ENCODE measurements at regions of chr11 and their contacts with region 1.

Region 1: DNA sequence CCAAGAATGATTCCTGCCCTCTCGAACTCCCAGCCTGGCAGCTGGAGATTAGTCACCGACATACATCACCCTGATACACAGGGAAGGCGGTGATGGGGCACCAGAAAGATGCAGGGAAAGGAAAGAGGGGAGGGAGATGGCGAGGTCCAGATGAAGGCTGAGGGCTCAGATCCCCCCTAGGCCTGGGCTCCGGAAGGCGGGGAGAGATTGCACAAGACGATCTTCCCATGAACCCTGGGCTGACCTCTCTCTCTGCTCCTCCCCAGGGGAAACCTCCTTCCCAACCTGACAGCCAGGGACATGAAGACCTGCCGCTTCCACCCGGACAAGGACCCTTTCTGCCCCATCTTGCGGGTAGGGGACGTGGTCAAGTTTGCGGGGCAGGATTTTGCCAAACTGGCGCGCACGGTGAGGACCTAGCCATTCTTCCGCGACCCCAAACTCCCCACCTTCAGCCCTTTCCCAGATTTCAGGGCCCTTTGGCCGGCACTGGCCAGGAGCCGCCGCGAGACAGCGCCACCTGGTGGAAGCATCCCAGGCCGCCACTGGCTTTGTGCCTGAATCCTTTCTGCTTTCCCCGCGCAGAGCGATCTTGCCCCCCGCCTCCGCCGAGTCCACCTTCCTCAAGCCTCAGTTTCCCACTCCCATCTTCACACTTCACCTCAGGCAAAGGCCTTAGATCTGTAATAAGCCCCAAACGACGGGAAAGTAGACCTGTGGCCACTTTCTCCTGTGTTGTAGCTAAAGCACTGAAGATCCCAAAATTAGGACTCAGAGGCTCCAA is 11.5 kb downstream of the P2RX3 start:
- ATAC-seq: peak; percentile 68 to 89 (median 78)
- H3K4me3 ChIP-seq: no peak overlapping the region
- H3K27ac ChIP-seq: no peak overlapping the region
- H3K4me1 ChIP-seq: peaks cover 11 to 25% of the 10 kb centered on the region in 2 donors

Region 2: DNA sequence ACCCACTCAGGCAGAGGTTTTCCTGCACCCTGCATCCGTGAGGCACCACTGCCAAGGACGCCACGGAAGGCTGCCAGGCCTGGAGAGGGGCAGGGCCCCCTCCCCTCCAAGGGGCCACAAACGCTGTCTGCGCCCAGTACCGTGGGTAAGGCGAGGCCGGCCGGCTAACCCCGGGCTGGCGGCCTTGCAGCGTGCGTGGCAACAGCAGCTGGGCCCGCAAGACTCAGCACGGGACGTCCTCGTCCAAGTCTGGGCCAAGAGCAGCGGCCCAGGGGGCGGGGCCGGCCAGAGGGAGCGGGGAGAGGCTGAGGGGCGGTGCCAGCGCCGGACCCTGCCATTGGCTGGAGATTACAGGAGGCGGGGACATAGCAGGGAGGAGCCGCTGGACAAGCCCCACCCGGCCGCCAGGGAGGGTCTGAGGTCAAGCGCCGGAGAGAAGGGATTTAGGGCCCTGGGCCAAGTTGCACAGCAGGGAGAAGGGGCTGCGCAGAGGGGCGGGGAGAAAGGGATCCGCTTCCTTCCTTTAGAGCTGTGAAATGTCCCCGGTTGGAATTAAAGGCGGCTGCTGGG is 149.8 kb after region 1 on chr11:
- in situ Hi-C with region 1: loop called in 2 of 9 experiments (anchors 25 kb)
- ATAC-seq: peak; percentile 98 to 100 (median 99)
- H3K4me3 ChIP-seq: peak overlapping the region; percentile 11 to 32 (median 26)
- H3K27ac ChIP-seq: no peak overlapping the region
- H3K4me1 ChIP-seq: peaks cover 8 to 10% of the 10 kb centered on the region in 2 donors

Region 3: GRCh38 chr11:57530596-57531507 is 181.2 kb after region 1 on chr11 and contains the start of gene TIMM10:
- in situ Hi-C with region 1: loop called in 1 of 9 experiments (anchors 25 kb)
- ATAC-seq: peak; percentile 97 to 100 (median 99)
- H3K4me3 ChIP-seq: peak within 1 kb of the TSS; percentile 52 to 88 (median 55)
- H3K27ac ChIP-seq: peak within 1 kb of the TSS in 1 of 2 donors; percentile 13
- H3K4me1 ChIP-seq: peaks cover 6 to 13% of the 10 kb centered on the region in 2 donors
- total RNA-seq, gene TIMM10: 28.3 to 86.7 (median 58.9) TPM

Measured in motor neuron (in vitro differentiated cells).